Gastrocnemius medialis (tissue), 4 donors: ENCODE measurements at regions of chr16 and their contacts with region 1.

Region 1: GRCh38 chr16:19521471-19522396 is at the start of gene GDE1:
- DNase-seq: peak; percentile 89 to 93
- ATAC-seq: peak; percentile 90
- H3K4me3 ChIP-seq: peak within 1 kb of the TSS; percentile 79 to 96 (median 92)
- H3K27ac ChIP-seq: peak within 1 kb of the TSS; percentile 86 to 94 (median 90)
- H3K4me1 ChIP-seq: peaks cover 28 to 30% of the 10 kb centered on the region in 2 donors
- H3K27me3 ChIP-seq: no peaks in the 10 kb centered on the region
- CTCF ChIP-seq: peak in 2 of 5 experiments; percentile 30 to 38
- POLR2A ChIP-seq: peak; percentile 85 to 92
- total RNA-seq, gene GDE1: 48.8 to 64.1 (median 53.7) TPM

Region 2: DNA sequence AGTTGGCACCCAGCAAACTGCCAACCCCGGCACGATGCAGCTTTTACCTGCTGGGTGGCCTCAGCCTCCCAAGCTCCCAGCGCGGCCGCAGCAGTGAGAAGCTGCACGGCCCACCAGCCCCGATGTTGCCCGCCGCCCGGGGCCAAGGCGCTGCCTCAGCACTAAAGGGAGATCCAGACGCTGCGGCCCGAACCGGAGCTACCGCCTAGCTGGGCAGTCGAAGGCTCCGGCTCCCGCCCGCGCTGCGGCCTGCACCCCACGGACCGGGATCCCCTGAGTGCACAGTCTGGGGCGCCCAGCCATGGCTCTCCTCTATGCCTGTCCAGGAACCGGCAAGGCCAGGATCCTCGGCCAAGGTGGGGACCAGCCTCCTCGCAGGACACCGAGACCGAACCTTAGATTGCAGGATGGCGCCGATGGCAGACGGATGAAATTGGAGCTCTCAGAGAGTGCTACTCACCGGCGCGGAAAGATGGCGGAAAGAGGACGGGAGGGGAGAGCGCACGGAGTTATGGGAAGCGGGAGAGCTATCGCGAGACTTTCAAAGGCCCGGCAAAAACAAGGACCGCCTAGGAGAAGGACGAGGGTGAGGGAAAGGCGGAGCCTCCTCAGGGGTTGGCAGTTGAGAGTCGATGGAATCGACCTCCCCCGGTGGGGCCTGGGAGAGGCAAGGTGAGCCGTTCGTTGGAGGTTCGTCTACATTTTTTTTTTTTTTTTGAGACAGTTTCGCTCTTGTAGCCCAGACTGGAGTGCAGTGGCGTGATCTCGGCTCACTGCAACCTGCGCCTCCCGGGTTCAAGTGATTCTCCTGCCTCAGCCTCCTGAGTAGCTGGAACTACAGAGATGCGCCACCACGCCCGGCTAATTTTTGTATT is 731.6 kb before region 1 on chr16 and contains the start of gene RPS15A:
- in situ Hi-C with region 1: loop called in 1 of 4 experiments (anchors 25 kb)
- intact Hi-C with region 1: no loop called
- DNase-seq: peak; percentile 94 to 96
- ATAC-seq: peak; percentile 96 to 98
- H3K4me3 ChIP-seq: peak within 1 kb of the TSS; percentile 83 to 98 (median 86)
- H3K27ac ChIP-seq: peak within 1 kb of the TSS; percentile 87 to 96 (median 90)
- H3K4me1 ChIP-seq: peaks cover 40 to 48% of the 10 kb centered on the region in 2 donors
- H3K27me3 ChIP-seq: no peaks in the 10 kb centered on the region
- CTCF ChIP-seq: no peak
- POLR2A ChIP-seq: peak; percentile 86 to 89
- total RNA-seq, gene RPS15A: 1,340 to 2,259 (median 1,706) TPM

Region 3: GRCh38 chr16:19067349-19068236 is 454.1 kb before region 1 on chr16 and contains the start of gene COQ7:
- in situ Hi-C with region 1: no loop called
- intact Hi-C with region 1: loop called (anchors 1 kb)
- DNase-seq: peak; percentile 98 to 99
- ATAC-seq: peak; percentile 95 to 98
- H3K4me3 ChIP-seq: peak within 1 kb of the TSS; percentile 75 to 95 (median 78)
- H3K27ac ChIP-seq: peak within 1 kb of the TSS; percentile 94 to 99 (median 96)
- H3K4me1 ChIP-seq: peaks cover 14 to 20% of the 10 kb centered on the region in 2 donors
- H3K27me3 ChIP-seq: no peaks in the 10 kb centered on the region
- CTCF ChIP-seq: no peak
- POLR2A ChIP-seq: peak; percentile 79 to 80
- total RNA-seq, gene COQ7: 15.1 to 36.2 (median 21.7) TPM

Region 4: DNA sequence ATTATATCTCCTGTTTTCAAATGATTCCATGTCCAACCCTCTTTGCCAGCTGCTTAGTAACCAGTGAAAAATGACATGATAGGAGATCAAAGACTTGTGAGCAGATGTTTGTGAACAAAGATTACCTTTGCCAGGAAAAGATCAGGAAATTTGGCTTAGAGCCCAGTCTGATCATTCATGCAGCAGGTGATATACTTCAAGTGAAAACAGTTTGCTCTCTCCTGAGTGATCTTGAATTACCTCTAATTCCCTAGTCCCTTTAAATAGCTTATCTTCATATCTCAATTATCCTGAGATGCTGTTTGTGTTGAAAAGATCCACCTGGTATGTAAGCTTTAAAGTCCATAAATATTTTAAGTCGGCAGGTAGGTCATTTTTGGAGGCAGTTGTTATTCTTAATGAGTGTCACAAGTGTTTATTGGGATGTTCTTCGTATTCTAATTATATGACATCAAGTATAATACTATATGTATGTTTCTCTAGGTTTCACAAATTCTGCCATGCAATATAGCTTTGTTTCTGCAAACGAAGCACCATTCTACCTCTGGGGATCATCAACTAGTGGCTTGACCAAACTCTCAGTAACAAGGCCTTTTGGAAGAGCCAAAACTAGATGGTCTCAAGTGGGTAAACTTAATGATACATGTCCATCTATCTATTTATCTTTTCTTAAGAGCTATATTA is 20.5 kb after region 1 on chr16:
- in situ Hi-C with region 1: no loop called
- intact Hi-C with region 1: loop called (anchors 2 kb)
- DNase-seq: no peak
- ATAC-seq: no peak
- H3K4me3 ChIP-seq: no peak overlapping the region
- H3K27ac ChIP-seq: no peak overlapping the region
- H3K4me1 ChIP-seq: no peaks in the 10 kb centered on the region
- H3K27me3 ChIP-seq: no peaks in the 10 kb centered on the region
- CTCF ChIP-seq: no peak
- POLR2A ChIP-seq: no peak

Region 5: GRCh38 chr16:19717771-19718602 is 196.3 kb after region 1 on chr16 and contains the starts of genes IQCK and KNOP1:
- in situ Hi-C with region 1: no loop called
- intact Hi-C with region 1: loop called (anchors 5 kb)
- DNase-seq: peak; percentile 83 to 87
- ATAC-seq: peak; percentile 89 to 90
- H3K4me3 ChIP-seq: peak within 1 kb of the TSS; percentile 83 to 95 (median 94)
- H3K27ac ChIP-seq: peak within 1 kb of the TSS; percentile 82 to 87 (median 86)
- H3K4me1 ChIP-seq: peaks cover 27% of the 10 kb centered on the region in 2 donors
- H3K27me3 ChIP-seq: no peaks in the 10 kb centered on the region
- CTCF ChIP-seq: peak in 2 of 5 experiments; percentile 26 to 28
- POLR2A ChIP-seq: peak; percentile 53 to 56
- total RNA-seq, gene IQCK: 8.3 to 17.3 (median 9.4) TPM
- total RNA-seq, gene KNOP1: 4.1 to 9.2 (median 5.5) TPM